Activated CD4-positive, alpha-beta memory T cell treated with anti-CD3 and anti-CD28 coated beads for 36 hours (primary cell): ENCODE measurements at regions of chr2 and their contacts with region 1.

Region 1: GRCh38 chr2:102418421-102418961 is 4.5 kb upstream of the IL18RAP start:
- DNase-seq: no peak
- H3K4me3 Mint-ChIP-seq: peak overlapping the region; percentile 64
- H3K27ac Mint-ChIP-seq: peak overlapping the region; percentile 85
- H3K4me1 Mint-ChIP-seq: peaks cover 59% of the 10 kb centered on the region
- H3K27me3 Mint-ChIP-seq: peaks cover 6% of the 10 kb centered on the region

Region 2: GRCh38 chr2:102436323-102436722 is 17.8 kb after region 1 on chr2:
- CTCF ChIA-PET with region 1: interaction called, 3 read pairs
- POLR2A ChIA-PET with region 1: no interaction called
- intact Hi-C with region 1: loop called (anchors 1 kb)
- DNase-seq: peak; percentile 54
- H3K4me3 Mint-ChIP-seq: no peak overlapping the region
- H3K27ac Mint-ChIP-seq: peak overlapping the region; percentile 34
- H3K4me1 Mint-ChIP-seq: peaks cover 30% of the 10 kb centered on the region
- H3K27me3 Mint-ChIP-seq: no peaks in the 10 kb centered on the region